ENCODE measurements at regions of chr5 and their contacts with region 1.

Region 1: DNA sequence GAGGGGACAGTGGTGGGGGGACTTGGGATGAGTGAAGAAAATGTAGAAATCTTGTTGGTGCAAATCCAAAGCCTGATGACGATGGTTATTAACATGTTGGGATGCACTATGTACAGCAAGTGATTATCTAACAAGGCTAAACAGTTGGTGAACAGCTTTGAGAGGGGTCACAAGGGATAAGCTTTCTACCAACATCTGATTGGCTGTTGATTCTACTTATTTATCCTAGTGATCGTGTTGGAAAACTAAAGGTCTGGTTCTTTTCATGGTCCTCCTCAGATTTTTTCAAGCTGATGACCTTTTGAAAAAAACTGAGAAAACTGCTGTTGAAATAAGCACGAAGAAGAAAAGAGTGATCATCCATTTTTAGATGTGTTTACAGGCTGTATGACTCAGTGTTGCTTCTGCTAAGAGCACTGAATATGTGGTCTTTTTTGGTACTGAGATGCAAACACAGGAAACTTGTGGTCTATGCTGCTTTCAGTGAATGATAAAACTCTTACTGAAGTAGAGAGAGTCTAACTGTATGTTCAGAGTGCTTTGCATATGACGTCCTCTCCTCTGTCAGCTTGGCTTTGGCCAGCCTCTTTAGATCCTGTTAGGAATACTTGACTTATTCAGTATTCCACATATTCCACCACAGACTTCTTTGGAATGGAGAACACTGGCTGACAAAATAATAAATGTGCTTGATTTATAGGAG is 174.8 kb downstream of the SLF1 start:
- DNase-seq: peak; percentile 46
- H3K4me3 Mint-ChIP-seq: peak overlapping the region; percentile 24
- H3K27ac Mint-ChIP-seq: peak overlapping the region; percentile 88
- H3K4me1 Mint-ChIP-seq: peaks cover 32% of the 10 kb centered on the region
- H3K27me3 Mint-ChIP-seq: no peaks in the 10 kb centered on the region

Region 2: GRCh38 chr5:93582677-93583438 is 1210.4 kb before region 1 on chr5 and contains the start of gene NR2F1:
- CTCF ChIA-PET with region 1: no interaction called
- intact Hi-C with region 1: loop called (anchors 5 kb)
- DNase-seq: no peak
- H3K4me3 Mint-ChIP-seq: peak within 1 kb of the TSS; percentile 54
- H3K27ac Mint-ChIP-seq: no peak within 1 kb of the TSS
- H3K4me1 Mint-ChIP-seq: peaks cover 28% of the 10 kb centered on the region
- H3K27me3 Mint-ChIP-seq: peaks cover 46% of the 10 kb centered on the region
- total RNA-seq, gene NR2F1: not detected

Region 3: DNA sequence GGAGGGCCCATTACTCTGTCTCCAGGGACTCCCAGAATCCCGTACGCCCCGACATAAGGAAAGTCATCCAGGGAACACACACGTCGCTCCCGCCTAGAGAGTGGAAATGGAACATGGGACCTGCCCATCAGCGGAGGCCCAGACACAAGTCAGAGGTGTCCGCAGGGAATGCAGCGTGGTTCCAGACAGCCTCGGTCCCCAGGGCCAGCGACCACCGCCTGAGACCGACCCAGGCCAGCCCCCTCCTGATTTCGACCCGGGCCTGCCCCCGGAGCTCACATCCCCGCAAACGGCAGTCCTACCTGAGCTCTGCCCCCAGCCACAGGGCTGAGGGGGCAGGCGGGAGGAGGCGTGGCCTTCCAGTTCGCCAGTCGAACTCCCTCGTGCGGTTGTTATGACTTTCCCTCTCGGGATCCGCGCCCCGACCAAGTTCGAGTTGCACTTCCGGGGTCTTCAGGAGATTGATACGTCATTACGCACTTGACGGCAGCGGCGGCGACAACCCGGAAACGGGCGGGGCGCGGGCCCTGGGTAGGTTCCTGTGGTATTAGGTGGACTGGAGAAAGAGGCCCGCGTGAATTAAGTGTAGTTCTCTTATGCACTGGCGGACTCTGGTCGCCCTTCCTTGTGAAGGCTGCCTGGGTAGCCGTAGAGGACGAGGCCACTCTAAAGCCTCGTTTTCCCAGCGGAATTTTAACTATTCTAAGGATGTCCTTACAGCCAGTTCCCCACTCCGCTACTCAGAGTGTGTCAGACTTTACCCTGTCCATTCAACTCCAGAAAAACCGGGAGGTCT is 681.9 kb before region 1 on chr5:
- CTCF ChIA-PET with region 1: no interaction called
- intact Hi-C with region 1: loop called (anchors 1 kb)
- DNase-seq: peak; percentile 96
- H3K4me3 Mint-ChIP-seq: peak overlapping the region; percentile 89
- H3K27ac Mint-ChIP-seq: peak overlapping the region; percentile 84
- H3K4me1 Mint-ChIP-seq: peaks cover 22% of the 10 kb centered on the region
- H3K27me3 Mint-ChIP-seq: peaks cover 7% of the 10 kb centered on the region

Region 4: GRCh38 chr5:94577466-94578245 is 215.6 kb before region 1 on chr5:
- CTCF ChIA-PET with region 1: no interaction called
- intact Hi-C with region 1: loop called (anchors 5 kb)
- DNase-seq: no peak
- H3K4me3 Mint-ChIP-seq: no peak overlapping the region
- H3K27ac Mint-ChIP-seq: no peak overlapping the region
- H3K4me1 Mint-ChIP-seq: peaks cover 16% of the 10 kb centered on the region
- H3K27me3 Mint-ChIP-seq: no peaks in the 10 kb centered on the region

Region 5: GRCh38 chr5:94700592-94700991 is 92.7 kb before region 1 on chr5:
- CTCF ChIA-PET with region 1: no interaction called
- intact Hi-C with region 1: loop called (anchors 2 kb)
- DNase-seq: no peak
- H3K4me3 Mint-ChIP-seq: no peak overlapping the region
- H3K27ac Mint-ChIP-seq: no peak overlapping the region
- H3K4me1 Mint-ChIP-seq: peaks cover 4% of the 10 kb centered on the region
- H3K27me3 Mint-ChIP-seq: no peaks in the 10 kb centered on the region

Region 6: GRCh38 chr5:94807985-94808384 is 14.7 kb after region 1 on chr5:
- CTCF ChIA-PET with region 1: interaction called, 3 read pairs
- intact Hi-C with region 1: loop called (anchors 1 kb)
- DNase-seq: no peak
- H3K4me3 Mint-ChIP-seq: no peak overlapping the region
- H3K27ac Mint-ChIP-seq: no peak overlapping the region
- H3K4me1 Mint-ChIP-seq: no peaks in the 10 kb centered on the region
- H3K27me3 Mint-ChIP-seq: no peaks in the 10 kb centered on the region

Region 7: GRCh38 chr5:94857111-94857510 is 63.8 kb after region 1 on chr5:
- CTCF ChIA-PET with region 1: no interaction called
- intact Hi-C with region 1: no loop called
- DNase-seq: no peak
- H3K4me3 Mint-ChIP-seq: no peak overlapping the region
- H3K27ac Mint-ChIP-seq: no peak overlapping the region
- H3K4me1 Mint-ChIP-seq: no peaks in the 10 kb centered on the region
- H3K27me3 Mint-ChIP-seq: no peaks in the 10 kb centered on the region

Region 8: GRCh38 chr5:95081500-95081960 is 288.3 kb after region 1 on chr5:
- CTCF ChIA-PET with region 1: no interaction called
- intact Hi-C with region 1: loop called (anchors 1 kb)
- DNase-seq: peak; percentile 64
- H3K4me3 Mint-ChIP-seq: no peak overlapping the region
- H3K27ac Mint-ChIP-seq: peak overlapping the region; percentile 24
- H3K4me1 Mint-ChIP-seq: peaks cover 13% of the 10 kb centered on the region
- H3K27me3 Mint-ChIP-seq: peaks cover 12% of the 10 kb centered on the region

Measured in activated naive CD4-positive, alpha-beta T cell treated with anti-CD3 and anti-CD28 coated beads for 36 hours (primary cell).